Activated CD8-positive, alpha-beta memory T cell treated with anti-CD3 and anti-CD28 coated beads, Interleukin-2, amount 10 ng/mL, durations not matched to agents 7 days and 5 days (primary cell): ENCODE measurements at regions of chr16 and their contacts with region 1.

Region 1: GRCh38 chr16:67555795-67556212 is 6.5 kb upstream of the CTCF start:
- DNase-seq: no peak
- ATAC-seq: peak; percentile 94
- H3K4me3 Mint-ChIP-seq: peak overlapping the region; percentile 33
- H3K27ac Mint-ChIP-seq: peak overlapping the region; percentile 98
- H3K4me1 Mint-ChIP-seq: peaks cover 53% of the 10 kb centered on the region
- H3K27me3 Mint-ChIP-seq: no peaks in the 10 kb centered on the region

Region 2: DNA sequence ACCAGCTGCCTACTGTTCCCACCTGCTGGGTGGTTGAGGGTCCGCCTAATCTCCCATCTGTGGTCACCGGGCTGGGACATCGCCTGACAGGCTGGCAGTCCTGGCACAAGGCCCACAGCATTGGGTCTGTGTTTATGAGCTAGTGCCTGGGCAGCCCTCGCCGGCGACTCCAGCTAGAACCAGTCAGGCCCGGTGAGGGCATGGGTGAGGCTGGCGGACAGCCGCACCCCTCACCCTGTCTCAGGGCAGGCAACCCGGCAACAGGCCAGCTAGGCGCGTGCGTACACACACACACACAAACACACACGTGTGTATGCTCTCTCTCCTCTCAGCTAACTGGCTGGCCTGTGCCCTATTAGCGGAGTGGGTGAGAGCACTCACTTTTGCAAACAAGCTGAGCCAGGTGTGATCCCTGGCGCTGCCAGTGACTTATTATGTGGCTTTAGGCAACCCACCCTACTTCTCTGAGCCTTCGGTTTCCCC is 114.5 kb before region 1 on chr16:
- CTCF ChIA-PET with region 1: no interaction called
- DNase-seq: no peak
- ATAC-seq: no peak
- H3K4me3 Mint-ChIP-seq: no peak overlapping the region
- H3K27ac Mint-ChIP-seq: no peak overlapping the region
- H3K4me1 Mint-ChIP-seq: peaks cover 3% of the 10 kb centered on the region
- H3K27me3 Mint-ChIP-seq: no peaks in the 10 kb centered on the region

Region 3: GRCh38 chr16:67514382-67514828 is 41.4 kb before region 1 on chr16:
- CTCF ChIA-PET with region 1: interaction called, 11 read pairs
- DNase-seq: peak; percentile 89
- ATAC-seq: peak; percentile 82
- H3K4me3 Mint-ChIP-seq: no peak overlapping the region
- H3K27ac Mint-ChIP-seq: peak overlapping the region; percentile 78
- H3K4me1 Mint-ChIP-seq: peaks cover 20% of the 10 kb centered on the region
- H3K27me3 Mint-ChIP-seq: no peaks in the 10 kb centered on the region